A549 (cell line): ENCODE measurements at regions of chr3 and their contacts with region 1.

Region 1: GRCh38 chr3:50260027-50260941 is 8.7 kb upstream of the SEMA3B start:
- DNase-seq: peak; percentile 68 to 85
- ATAC-seq: peak; percentile 83 to 88
- H3K4me3 ChIP-seq: peak overlapping the region; percentile 85
- H3K27ac ChIP-seq: peak overlapping the region; percentile 94 to 99
- H3K4me1 ChIP-seq: peaks cover 34% of the 10 kb centered on the region
- CTCF ChIP-seq: peak; percentile 83
- EP300 ChIP-seq: no peak
- POLR2A ChIP-seq: peak; percentile 50
- RAD21 ChIP-seq: peak; percentile 57 to 77

Region 2: GRCh38 chr3:50170689-50171088 is 89.6 kb before region 1 on chr3:
- CTCF ChIA-PET with region 1: no interaction called
- POLR2A ChIA-PET with region 1: no interaction called
- DNase-seq: peak in 1 of 2 experiments; percentile 61
- ATAC-seq: peak; percentile 17 to 43; a peak in 1 of 6 replicates
- H3K4me3 ChIP-seq: no peak overlapping the region
- H3K27ac ChIP-seq: peak overlapping the region; percentile 68 to 94
- H3K4me1 ChIP-seq: peaks cover 69% of the 10 kb centered on the region
- CTCF ChIP-seq: no peak
- EP300 ChIP-seq: no peak
- POLR2A ChIP-seq: no peak
- RAD21 ChIP-seq: no peak

Region 3: DNA sequence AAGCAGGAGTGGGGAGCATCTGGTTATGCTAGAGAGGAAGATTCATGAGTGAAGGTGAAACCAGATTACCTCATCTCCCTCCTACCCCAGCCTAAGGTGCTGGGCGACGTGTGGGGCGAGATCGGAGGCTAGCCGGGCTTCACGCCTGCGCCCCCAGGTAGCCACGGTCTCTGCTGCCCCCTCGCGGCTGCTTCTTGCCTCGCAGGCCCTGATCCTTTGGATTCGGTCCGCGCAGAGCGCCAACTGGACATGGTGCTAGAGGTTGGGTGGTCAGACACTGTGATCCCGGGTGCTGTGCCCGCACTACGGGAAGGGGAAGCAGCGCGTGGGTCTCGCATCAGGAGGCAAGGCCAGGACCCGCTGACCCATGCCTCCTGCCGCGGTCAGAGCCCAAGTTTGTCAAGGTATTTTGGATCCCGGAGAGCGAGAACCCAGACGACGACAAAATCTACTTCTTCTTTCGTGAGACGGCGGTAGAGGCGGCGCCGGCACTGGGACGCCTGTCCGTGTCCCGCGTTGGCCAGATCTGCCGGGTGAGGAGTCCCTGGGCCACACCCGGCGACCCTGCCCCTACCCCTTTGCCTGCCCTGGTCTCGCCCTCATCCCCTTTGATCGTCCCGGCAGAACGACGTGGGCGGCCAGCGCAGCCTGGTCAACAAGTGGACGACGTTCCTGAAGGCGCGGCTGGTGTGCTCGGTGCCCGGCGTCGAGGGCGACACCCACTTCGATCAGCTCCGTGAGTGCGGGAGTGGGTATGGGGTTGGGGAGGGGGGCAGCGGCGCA is 12.8 kb after region 1 on chr3:
- CTCF ChIA-PET with region 1: interaction called, 67 read pairs
- POLR2A ChIA-PET with region 1: interaction called, 10 read pairs
- DNase-seq: peak; percentile 74 to 77
- ATAC-seq: peak; percentile 43 to 75
- H3K4me3 ChIP-seq: no peak overlapping the region
- H3K27ac ChIP-seq: 0 out of 6 replicates have a peak overlapping the region, but pooled peaks of 1 of the 2 experiments have one; percentile 37
- H3K4me1 ChIP-seq: peaks cover 41% of the 10 kb centered on the region
- CTCF ChIP-seq: peak; percentile 78
- EP300 ChIP-seq: no peak
- POLR2A ChIP-seq: no peak
- RAD21 ChIP-seq: peak; percentile 91

Region 4: DNA sequence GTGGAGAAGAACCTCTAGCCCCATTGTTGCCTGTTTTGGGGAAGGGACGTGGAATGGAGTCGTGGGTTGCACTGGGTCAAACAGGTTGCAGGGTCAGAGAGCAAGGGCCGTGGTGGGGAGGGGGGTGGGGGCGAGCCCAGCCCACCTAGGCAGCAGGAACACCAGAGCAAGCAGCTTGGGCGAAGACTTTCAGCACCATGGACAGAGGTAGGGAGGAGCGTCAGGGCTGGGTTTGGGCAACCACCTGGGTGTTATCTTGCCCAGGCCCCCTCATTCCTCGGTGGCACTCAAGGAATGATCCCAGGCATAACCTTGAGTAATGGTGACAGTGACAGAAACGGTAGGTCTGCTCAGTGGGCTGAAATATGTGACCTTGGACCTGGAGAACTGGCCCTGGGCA is 145.0 kb after region 1 on chr3:
- CTCF ChIA-PET with region 1: no interaction called
- POLR2A ChIA-PET with region 1: no interaction called
- DNase-seq: no peak
- ATAC-seq: no peak
- H3K4me3 ChIP-seq: no peak overlapping the region
- H3K27ac ChIP-seq: no peak overlapping the region
- H3K4me1 ChIP-seq: no peaks in the 10 kb centered on the region
- CTCF ChIP-seq: no peak
- EP300 ChIP-seq: no peak
- POLR2A ChIP-seq: no peak
- RAD21 ChIP-seq: no peak